ENCODE measurements at regions of chr10 and their contacts with region 1.

Region 1: DNA sequence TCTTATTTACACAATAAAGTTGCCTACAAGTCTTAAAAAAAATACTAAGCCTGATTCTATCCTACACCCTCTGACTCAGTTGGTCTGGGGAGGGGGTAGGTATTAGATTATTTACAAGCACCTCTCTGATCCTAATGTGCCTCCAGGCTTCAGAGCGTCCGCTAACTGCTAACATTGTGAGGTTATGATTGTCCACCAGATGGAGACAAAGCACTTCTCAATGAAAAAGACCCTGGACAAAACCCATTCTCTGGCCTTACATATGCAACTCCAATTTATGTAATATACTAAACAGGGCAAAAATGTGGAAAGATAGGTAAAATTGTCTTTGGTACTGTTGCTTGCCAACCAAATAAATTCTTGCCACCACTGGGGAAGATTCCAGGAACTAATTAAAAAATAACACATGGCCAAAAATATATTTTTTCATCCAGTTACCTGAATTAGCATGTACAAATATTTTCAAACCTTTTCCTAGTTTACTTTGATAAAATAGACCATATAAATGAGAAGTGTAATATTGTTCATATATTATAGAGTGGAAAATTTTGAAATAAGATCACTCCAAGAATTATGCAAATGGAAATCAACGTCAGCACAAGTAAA is 92.4 kb downstream of the KIF20B start:
- DNase-seq: peak; percentile 83
- H3K4me3 Mint-ChIP-seq: no peak overlapping the region
- H3K27ac Mint-ChIP-seq: no peak overlapping the region
- H3K4me1 Mint-ChIP-seq: peaks cover 7% of the 10 kb centered on the region
- H3K27me3 Mint-ChIP-seq: peaks cover 3% of the 10 kb centered on the region

Region 2: DNA sequence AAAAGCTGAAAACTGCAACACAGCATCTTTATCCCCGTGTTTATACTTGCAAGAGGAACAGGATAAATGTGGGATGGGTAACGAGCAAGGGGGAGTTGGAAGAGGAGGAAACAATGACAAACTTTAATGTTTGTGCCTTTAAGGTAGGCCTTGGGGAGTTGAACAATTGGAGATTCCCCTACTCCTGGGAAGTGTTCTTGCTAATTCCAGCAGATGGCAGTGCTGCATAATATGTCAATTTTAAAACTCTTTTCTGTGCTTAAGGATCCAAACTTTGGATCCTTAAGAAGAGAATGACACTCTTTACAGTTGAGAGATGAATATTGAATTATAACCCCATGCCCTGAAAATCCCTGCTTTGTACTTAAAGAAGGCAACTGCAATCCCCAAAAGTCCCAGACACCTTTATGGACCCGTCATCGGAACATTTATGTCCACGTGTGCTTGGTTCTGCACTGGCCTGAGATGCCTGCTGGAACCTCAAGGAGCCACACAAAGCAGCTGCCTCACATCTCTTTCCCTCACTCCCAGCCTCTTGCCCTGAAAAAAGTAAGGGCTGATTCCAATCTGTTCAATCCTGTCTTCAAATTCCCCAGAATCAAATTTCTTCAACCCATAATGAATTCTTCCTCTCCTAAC is 367.4 kb before region 1 on chr10:
- intact Hi-C with region 1: loop called (anchors 10 kb)
- DNase-seq: peak; percentile 71
- H3K4me3 Mint-ChIP-seq: no peak overlapping the region
- H3K27ac Mint-ChIP-seq: no peak overlapping the region
- H3K4me1 Mint-ChIP-seq: no peaks in the 10 kb centered on the region
- H3K27me3 Mint-ChIP-seq: peaks cover 17% of the 10 kb centered on the region

Region 3: GRCh38 chr10:89861584-89862301 is 68.0 kb after region 1 on chr10:
- intact Hi-C with region 1: no loop called
- DNase-seq: peak; percentile 64
- H3K4me3 Mint-ChIP-seq: peak overlapping the region; percentile 35
- H3K27ac Mint-ChIP-seq: peak overlapping the region; percentile 72
- H3K4me1 Mint-ChIP-seq: peaks cover 17% of the 10 kb centered on the region
- H3K27me3 Mint-ChIP-seq: peaks cover 6% of the 10 kb centered on the region

Region 4: DNA sequence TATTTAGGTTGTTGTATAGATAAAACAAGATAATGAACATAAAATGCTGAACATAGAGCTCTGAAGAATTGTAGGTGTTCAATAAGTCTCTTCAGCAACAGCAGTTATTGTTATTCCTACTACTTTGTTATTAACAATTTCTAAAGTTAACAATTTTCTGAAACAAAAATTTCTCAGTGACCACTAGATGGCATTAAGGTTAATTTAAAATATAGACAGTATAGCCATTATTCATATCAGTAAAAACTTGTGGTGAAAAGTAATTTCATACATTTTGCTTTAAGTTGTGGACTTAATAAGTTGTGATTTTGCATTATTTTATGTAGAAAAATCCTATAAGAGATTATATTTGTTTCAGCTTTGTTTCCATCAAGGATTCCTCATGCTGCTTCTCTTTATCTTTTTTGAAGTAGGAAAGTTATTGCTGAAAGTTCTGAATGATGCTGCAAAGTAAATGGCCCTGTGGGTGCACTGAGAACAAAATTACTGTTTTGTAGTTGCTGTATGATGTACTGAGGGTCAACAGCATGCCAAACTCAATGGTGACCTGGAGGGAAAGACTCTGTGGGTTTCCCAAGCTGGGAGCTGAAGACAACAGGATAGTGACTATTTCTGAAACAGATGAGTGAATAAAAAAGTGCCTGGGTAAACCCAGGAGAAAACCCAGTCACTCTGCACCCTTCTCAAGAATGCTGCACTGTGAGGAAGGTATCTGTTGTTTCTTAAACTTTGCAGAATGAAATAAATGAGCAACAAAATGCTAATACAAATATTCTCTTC is 161.2 kb after region 1 on chr10:
- intact Hi-C with region 1: loop called (anchors 10 kb)
- DNase-seq: no peak
- H3K4me3 Mint-ChIP-seq: no peak overlapping the region
- H3K27ac Mint-ChIP-seq: no peak overlapping the region
- H3K4me1 Mint-ChIP-seq: no peaks in the 10 kb centered on the region
- H3K27me3 Mint-ChIP-seq: peaks cover 6% of the 10 kb centered on the region

Region 5: DNA sequence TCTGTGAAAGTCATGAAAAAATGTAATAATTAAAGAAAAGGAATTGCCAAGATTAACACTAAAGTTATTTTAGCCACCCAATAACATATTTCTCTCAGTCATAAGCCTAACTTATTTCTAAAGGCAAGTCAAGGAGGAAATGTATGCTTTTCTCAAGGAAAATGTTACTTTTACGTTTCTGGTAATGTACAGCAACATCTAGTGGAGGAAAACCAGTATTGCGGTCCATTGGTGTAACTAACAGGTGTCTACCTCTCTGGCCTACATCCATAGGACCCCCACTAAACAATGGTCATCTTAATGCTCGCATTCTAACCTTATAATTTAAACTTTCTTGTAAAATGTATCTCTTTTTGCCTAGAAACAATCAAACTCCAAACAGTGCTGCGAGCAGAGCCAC is 345.1 kb after region 1 on chr10:
- intact Hi-C with region 1: loop called (anchors 2 kb)
- DNase-seq: no peak
- H3K4me3 Mint-ChIP-seq: no peak overlapping the region
- H3K27ac Mint-ChIP-seq: no peak overlapping the region
- H3K4me1 Mint-ChIP-seq: no peaks in the 10 kb centered on the region
- H3K27me3 Mint-ChIP-seq: no peaks in the 10 kb centered on the region

Measured in activated CD4-positive, alpha-beta T cell treated with anti-CD3 and anti-CD28 coated beads, Interleukin-2, amount 10 ng/mL, durations not matched to agents 24 days and 14 days (primary cell).